CD8-positive, alpha-beta memory T cell (primary cell): ENCODE measurements at regions of chr7 and their contacts with region 1.

Region 1: DNA sequence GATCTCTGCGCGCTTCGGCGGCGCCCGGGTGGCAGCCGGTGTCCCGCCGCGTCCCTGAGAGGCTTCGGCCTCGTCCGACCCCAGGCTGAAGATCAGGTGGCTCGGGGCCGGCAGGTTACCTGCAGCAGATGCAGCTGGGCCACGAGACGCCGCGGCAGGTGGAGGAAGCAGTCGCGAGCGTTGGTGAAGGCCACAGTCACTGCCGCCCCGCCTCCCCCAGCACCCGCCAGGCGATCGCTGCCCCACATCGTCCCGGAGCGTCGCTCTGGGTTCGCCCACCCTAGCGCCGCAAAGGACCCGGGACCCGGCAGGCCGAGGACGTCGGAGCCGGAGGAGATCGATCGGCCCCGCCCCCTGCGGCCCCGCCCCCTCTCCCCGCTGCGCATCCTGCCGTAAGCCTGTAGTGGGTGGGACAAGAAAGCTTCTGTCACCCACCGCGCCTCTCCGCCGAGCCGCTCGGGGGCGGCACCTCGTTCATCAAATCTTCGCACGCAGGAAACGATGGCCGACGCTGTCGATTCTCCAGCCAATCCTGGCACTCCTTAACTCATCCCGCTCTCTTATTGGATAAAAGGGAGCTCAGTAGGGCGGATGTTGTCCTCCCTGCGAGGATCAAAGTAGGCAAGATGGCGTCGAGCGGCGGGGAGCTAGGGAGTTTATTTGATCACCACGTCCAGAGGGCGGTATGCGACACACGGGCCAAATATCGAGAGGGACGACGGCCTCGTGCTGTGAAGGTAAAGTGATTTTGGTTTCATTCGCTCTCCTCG is at the starts of genes PEX1 and RBM48:
- DNase-seq: peak; percentile 94 to 98 (median 96)
- H3K4me3 ChIP-seq: peak within 1 kb of the TSS; percentile 99
- H3K4me3 Mint-ChIP-seq: peak within 1 kb of the TSS; percentile 86 to 97 (median 89)
- H3K27ac ChIP-seq: peak within 1 kb of the TSS; percentile 97
- H3K27ac Mint-ChIP-seq: peak within 1 kb of the TSS; percentile 87 to 100 (median 96)
- H3K4me1 ChIP-seq: peaks cover 17% of the 10 kb centered on the region
- H3K4me1 Mint-ChIP-seq: peaks cover 39 to 58% (median 56%) of the 10 kb centered on the region in 3 donors
- H3K27me3 ChIP-seq: no peaks in the 10 kb centered on the region
- H3K27me3 Mint-ChIP-seq: peaks cover 0 to 3% of the 10 kb centered on the region in 2 donors
- total RNA-seq, gene PEX1: 17.8 to 18.0 TPM
- total RNA-seq, gene RBM48: 15.7 to 18.0 TPM

Region 2: GRCh38 chr7:92245487-92246362 is 282.6 kb before region 1 on chr7 and contains the starts of genes ANKIB1 and KRIT1:
- CTCF ChIA-PET with region 1: interaction called, 5 read pairs
- POLR2A ChIA-PET with region 1: interaction called, 13 read pairs
- DNase-seq: peak; percentile 82 to 92 (median 86)
- H3K4me3 ChIP-seq: peak within 1 kb of the TSS; percentile 75
- H3K4me3 Mint-ChIP-seq: peak within 1 kb of the TSS; percentile 94 to 100 (median 98)
- H3K27ac ChIP-seq: peak within 1 kb of the TSS; percentile 86
- H3K27ac Mint-ChIP-seq: peak within 1 kb of the TSS; percentile 98 to 100 (median 100)
- H3K4me1 ChIP-seq: peaks cover 32% of the 10 kb centered on the region
- H3K4me1 Mint-ChIP-seq: peaks cover 52 to 59% (median 56%) of the 10 kb centered on the region in 3 donors
- H3K27me3 ChIP-seq: no peaks in the 10 kb centered on the region
- H3K27me3 Mint-ChIP-seq: no peaks in the 10 kb centered on the region
- total RNA-seq, gene ANKIB1: 42.7 to 44.7 TPM
- total RNA-seq, gene KRIT1: 44.6 to 48.3 TPM

Region 3: GRCh38 chr7:92456236-92456635 is 72.1 kb before region 1 on chr7:
- CTCF ChIA-PET with region 1: no interaction called
- POLR2A ChIA-PET with region 1: no interaction called
- DNase-seq: no peak
- H3K4me3 ChIP-seq: no peak overlapping the region
- H3K4me3 Mint-ChIP-seq: no peak overlapping the region
- H3K27ac ChIP-seq: no peak overlapping the region
- H3K27ac Mint-ChIP-seq: peak overlapping the region in 1 of 8 donors; percentile 40
- H3K4me1 ChIP-seq: no peaks in the 10 kb centered on the region
- H3K4me1 Mint-ChIP-seq: no peaks in the 10 kb centered on the region
- H3K27me3 ChIP-seq: no peaks in the 10 kb centered on the region
- H3K27me3 Mint-ChIP-seq: no peaks in the 10 kb centered on the region

Region 4: DNA sequence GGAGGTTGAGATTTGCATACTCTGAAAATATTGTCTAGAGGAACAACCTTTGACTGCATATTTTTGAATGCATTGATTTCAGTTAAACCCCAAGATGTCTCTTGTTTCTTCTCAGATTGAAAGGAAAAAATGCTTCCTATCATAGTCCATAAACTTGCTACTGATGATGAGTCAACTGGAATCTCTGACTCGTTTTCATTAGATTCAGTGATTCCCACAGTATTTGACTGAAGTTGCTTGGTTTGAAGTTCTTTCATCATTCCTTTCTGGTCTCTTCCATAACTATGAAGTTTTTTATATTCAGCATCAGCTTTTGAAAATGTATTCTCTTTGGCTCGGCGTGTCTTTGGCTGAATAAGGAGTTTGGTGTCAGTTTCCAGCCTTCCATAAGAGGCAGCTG is 10.7 kb before region 1 on chr7:
- CTCF ChIA-PET with region 1: interaction called, 12 read pairs
- POLR2A ChIA-PET with region 1: interaction called, 4 read pairs
- DNase-seq: no peak
- H3K4me3 ChIP-seq: no peak overlapping the region
- H3K4me3 Mint-ChIP-seq: no peak overlapping the region
- H3K27ac ChIP-seq: no peak overlapping the region
- H3K27ac Mint-ChIP-seq: no peak overlapping the region
- H3K4me1 ChIP-seq: no peaks in the 10 kb centered on the region
- H3K4me1 Mint-ChIP-seq: peaks cover 0 to 3% (median 0%) of the 10 kb centered on the region in 3 donors
- H3K27me3 ChIP-seq: no peaks in the 10 kb centered on the region
- H3K27me3 Mint-ChIP-seq: no peaks in the 10 kb centered on the region

Region 5: GRCh38 chr7:92563345-92563744 is 35.0 kb after region 1 on chr7:
- CTCF ChIA-PET with region 1: no interaction called
- POLR2A ChIA-PET with region 1: no interaction called
- DNase-seq: no peak
- H3K4me3 ChIP-seq: no peak overlapping the region
- H3K4me3 Mint-ChIP-seq: no peak overlapping the region
- H3K27ac ChIP-seq: no peak overlapping the region
- H3K27ac Mint-ChIP-seq: peak overlapping the region in 3 of 8 donors; percentile 14 to 34 (median 18)
- H3K4me1 ChIP-seq: no peaks in the 10 kb centered on the region
- H3K4me1 Mint-ChIP-seq: no peaks in the 10 kb centered on the region
- H3K27me3 ChIP-seq: no peaks in the 10 kb centered on the region
- H3K27me3 Mint-ChIP-seq: no peaks in the 10 kb centered on the region

Region 6: DNA sequence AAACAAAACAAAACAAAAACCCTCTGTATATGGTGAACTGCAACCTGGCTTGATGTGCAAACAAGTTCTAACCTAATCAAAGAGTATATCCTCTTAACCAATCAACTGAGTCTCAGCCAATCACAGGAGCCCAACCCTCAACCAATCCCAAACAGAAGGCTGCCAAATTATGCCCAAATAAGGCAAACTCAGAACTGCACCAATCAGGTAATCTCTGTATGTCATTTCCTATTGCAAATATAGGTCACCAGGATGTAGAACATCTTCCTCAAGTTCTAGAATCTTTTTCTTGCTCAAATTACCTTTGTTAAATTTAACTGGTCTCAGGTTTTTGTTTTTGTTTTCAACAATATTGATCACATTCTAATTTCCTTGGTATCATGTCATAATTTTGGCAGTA is 56.6 kb after region 1 on chr7:
- CTCF ChIA-PET with region 1: interaction called, 11 read pairs
- POLR2A ChIA-PET with region 1: interaction called, 16 read pairs
- DNase-seq: peak in 1 of 5 donors; percentile 23
- H3K4me3 ChIP-seq: no peak overlapping the region
- H3K4me3 Mint-ChIP-seq: peak overlapping the region in 2 of 7 donors; percentile 12 to 34
- H3K27ac ChIP-seq: no peak overlapping the region
- H3K27ac Mint-ChIP-seq: peak overlapping the region in 7 of 8 donors; percentile 48 to 93 (median 81)
- H3K4me1 ChIP-seq: peaks cover 37% of the 10 kb centered on the region
- H3K4me1 Mint-ChIP-seq: peaks cover 65 to 87% (median 84%) of the 10 kb centered on the region in 3 donors
- H3K27me3 ChIP-seq: no peaks in the 10 kb centered on the region
- H3K27me3 Mint-ChIP-seq: peaks cover 0 to 2% of the 10 kb centered on the region in 2 donors

Region 7: GRCh38 chr7:92669616-92670165 is 141.3 kb after region 1 on chr7:
- CTCF ChIA-PET with region 1: no interaction called
- POLR2A ChIA-PET with region 1: no interaction called
- DNase-seq: no peak
- H3K4me3 ChIP-seq: no peak overlapping the region
- H3K4me3 Mint-ChIP-seq: no peak overlapping the region
- H3K27ac ChIP-seq: no peak overlapping the region
- H3K27ac Mint-ChIP-seq: no peak overlapping the region
- H3K4me1 ChIP-seq: no peaks in the 10 kb centered on the region
- H3K4me1 Mint-ChIP-seq: peaks cover 15 to 33% (median 33%) of the 10 kb centered on the region in 3 donors
- H3K27me3 ChIP-seq: no peaks in the 10 kb centered on the region
- H3K27me3 Mint-ChIP-seq: no peaks in the 10 kb centered on the region

Region 8: DNA sequence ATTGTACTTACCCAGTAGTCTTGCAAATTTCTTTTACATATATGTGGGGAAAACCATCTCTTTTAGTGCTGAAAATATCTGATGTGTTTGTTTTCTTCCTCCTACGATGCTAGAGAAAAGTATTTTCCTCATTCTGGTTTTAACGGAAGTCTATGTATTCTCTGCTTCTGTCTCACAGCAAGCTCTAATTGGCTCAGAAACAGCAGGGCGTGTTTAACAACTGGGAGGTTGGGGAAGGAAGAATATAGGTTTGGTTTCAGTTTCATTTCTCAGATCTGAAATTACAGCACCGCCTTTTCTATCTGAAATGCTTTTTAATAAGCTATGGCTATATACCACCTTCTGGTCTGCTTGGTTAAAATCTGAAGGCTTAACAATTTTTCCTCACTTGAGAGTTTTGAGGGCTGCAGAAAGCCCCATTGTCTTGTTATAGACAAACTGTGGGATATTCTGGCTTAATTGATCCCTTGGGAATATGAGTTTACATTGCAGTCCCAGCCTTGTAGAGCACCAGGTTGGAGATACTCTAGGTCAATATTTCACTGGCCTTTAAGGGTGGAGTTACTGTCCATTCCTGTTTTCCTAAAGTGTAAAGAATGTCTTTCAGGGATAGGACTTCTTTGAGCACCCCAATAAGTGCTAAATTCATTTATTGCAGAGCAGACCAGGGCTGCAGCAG is 589.6 kb after region 1 on chr7 and contains the start of gene SAMD9:
- CTCF ChIA-PET with region 1: no interaction called
- POLR2A ChIA-PET with region 1: interaction called, 12 read pairs
- DNase-seq: peak; percentile 18 to 79 (median 74)
- H3K4me3 ChIP-seq: peak within 1 kb of the TSS; percentile 85
- H3K4me3 Mint-ChIP-seq: peak within 1 kb of the TSS; percentile 82 to 95 (median 88)
- H3K27ac ChIP-seq: peak within 1 kb of the TSS; percentile 67
- H3K27ac Mint-ChIP-seq: peak within 1 kb of the TSS; percentile 77 to 99 (median 90)
- H3K4me1 ChIP-seq: peaks cover 33% of the 10 kb centered on the region
- H3K4me1 Mint-ChIP-seq: peaks cover 41 to 57% (median 54%) of the 10 kb centered on the region in 3 donors
- H3K27me3 ChIP-seq: no peaks in the 10 kb centered on the region
- H3K27me3 Mint-ChIP-seq: peaks cover 0 to 2% of the 10 kb centered on the region in 2 donors
- total RNA-seq, gene SAMD9: 9.3 to 9.4 TPM